K562 (cell line): ENCODE measurements at regions of chr22 and their contacts with region 1.

Region 1: GRCh38 chr22:20469110-20469868 is 26.3 kb downstream of the KLHL22 start:
- DNase-seq: peak; percentile 62 to 71 (median 68)
- ATAC-seq: peak; percentile 44
- H3K4me3 ChIP-seq: no peak overlapping the region
- H3K27ac ChIP-seq: no peak overlapping the region
- H3K4me1 ChIP-seq: peaks cover 7 to 13% of the 10 kb centered on the region in 2 experiments; a peak in 4 of 5 replicates
- H3K27me3 ChIP-seq: peaks cover 14 to 18% of the 10 kb centered on the region in 2 experiments; a peak in 4 of 5 replicates
- CTCF ChIP-seq: no peak
- EP300 ChIP-seq: no peak
- POLR2A ChIP-seq: 0 out of 2 replicates have a peak, but pooled peaks have one; percentile 29
- RAD21 ChIP-seq: no peak

Region 2: GRCh38 chr22:20479612-20480196 is 10.4 kb after region 1 on chr22:
- CTCF ChIA-PET with region 1: no interaction called
- POLR2A ChIA-PET with region 1: interaction called, 46 read pairs
- in situ Hi-C with region 1: no loop called
- intact Hi-C with region 1: no loop called
- DNase-seq: no peak
- ATAC-seq: 0 out of 3 replicates have a peak, but pooled peaks have one; percentile 15
- H3K4me3 ChIP-seq: no peak overlapping the region
- H3K27ac ChIP-seq: no peak overlapping the region
- H3K4me1 ChIP-seq: peaks cover 5 to 6% of the 10 kb centered on the region in 2 experiments; a peak in 4 of 5 replicates
- H3K27me3 ChIP-seq: no peaks in the 10 kb centered on the region
- CTCF ChIP-seq: no peak
- EP300 ChIP-seq: no peak
- POLR2A ChIP-seq: no peak
- RAD21 ChIP-seq: no peak

Region 3: GRCh38 chr22:20490183-20490940 is 21.1 kb after region 1 on chr22:
- CTCF ChIA-PET with region 1: no interaction called
- POLR2A ChIA-PET with region 1: interaction called, 46 read pairs
- in situ Hi-C with region 1: no loop called
- intact Hi-C with region 1: no loop called
- DNase-seq: no peak
- ATAC-seq: no peak
- H3K4me3 ChIP-seq: no peak overlapping the region
- H3K27ac ChIP-seq: no peak overlapping the region
- H3K4me1 ChIP-seq: peaks cover 11 to 26% of the 10 kb centered on the region in 2 experiments
- H3K27me3 ChIP-seq: no peaks in the 10 kb centered on the region
- CTCF ChIP-seq: no peak
- EP300 ChIP-seq: no peak
- POLR2A ChIP-seq: no peak
- RAD21 ChIP-seq: no peak